Sciatic nerve (tissue), 2 donors: ENCODE measurements at regions of chr3 and their contacts with region 1.

Region 1: DNA sequence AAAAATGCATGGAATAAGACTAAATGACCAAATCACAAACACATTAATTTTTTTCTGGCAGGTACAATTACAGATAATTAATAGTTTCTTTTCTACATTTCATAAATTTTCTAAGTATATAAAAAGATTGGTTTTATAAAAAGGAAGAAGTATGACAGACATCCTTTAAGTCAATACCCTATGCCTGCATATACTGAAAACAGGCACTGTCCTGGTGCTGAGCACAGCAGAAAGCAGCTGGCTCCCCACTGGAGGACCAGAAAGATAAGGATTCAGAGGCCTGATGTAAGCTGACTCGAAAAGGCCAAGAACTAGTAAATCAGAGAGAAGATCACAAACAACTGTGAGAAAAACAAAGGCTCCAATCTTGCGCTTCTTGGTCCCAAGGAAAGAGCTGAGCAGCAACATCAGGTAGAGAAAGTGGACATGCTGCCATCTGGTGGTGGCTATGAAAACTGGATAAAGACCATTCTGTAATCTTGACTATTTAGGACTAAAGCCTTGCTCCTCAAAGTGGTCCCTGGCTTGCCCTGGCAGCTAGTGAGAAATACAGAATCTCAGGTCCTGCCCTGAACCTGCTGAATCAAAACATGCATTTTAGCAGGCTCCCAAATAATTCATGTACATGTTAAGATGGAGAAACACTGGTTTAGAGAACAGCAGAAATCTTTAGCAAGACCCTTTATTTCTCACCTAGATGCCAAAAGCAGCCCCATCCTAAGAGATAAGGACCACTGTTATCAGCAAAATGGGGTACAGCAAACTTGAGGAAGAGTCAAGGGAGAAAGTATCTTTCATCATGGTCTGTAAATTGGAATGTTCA is 76.0 kb downstream of the TRANK1 start:
- DNase-seq: peak; percentile 68
- ATAC-seq: peak; percentile 89

Region 2: DNA sequence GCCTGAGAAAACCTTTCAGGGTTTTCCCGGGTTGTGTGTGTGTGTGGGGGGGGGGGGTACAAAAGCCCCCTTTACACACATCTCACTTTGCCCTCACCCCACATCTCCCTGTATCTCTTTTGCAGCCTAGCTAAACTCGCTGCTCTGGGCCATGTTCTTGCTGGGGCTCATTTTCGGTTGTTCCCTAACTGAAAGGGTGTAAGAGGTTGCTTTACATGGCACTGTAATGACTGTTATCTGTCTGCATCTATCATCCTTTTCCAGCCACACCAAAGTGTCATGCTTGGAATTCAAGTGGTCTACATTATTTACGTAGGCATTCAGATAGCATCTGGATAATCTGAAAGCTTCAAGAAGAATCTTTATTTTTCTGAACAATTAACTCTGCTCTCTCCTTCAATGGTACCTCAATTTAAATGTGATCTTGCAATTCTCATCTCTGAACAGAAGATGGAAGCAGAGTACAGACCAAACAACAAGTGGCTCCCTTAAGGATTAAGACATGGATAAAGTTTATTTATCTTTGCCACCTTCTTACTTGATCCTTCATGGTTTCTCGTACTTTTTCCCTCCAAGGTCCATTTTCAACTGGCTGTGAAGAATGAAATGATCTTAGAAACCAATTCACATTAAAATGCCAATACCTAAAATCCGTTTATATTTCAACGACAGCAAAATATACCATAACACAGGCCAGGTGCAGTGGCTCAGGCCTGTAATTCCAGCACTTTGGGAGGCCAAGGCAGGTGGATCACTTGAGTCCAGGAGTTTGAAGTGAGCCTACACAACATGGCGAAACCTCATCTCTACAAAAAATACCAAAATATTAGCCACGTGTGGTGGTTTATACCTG is 139.4 kb before region 1 on chr3:
- intact Hi-C with region 1: loop called (anchors 10 kb)
- DNase-seq: no peak
- ATAC-seq: peak; percentile 80